Common myeloid progenitor, CD34-positive (primary cell): ENCODE measurements at regions of chr10 and their contacts with region 1.

Region 1: GRCh38 chr10:80205478-80206276 is at the start of gene ANXA11:
- DNase-seq: peak; percentile 76 to 85 (median 84)
- H3K4me3 ChIP-seq: peak within 1 kb of the TSS; percentile 66 to 90 (median 77)
- H3K27ac ChIP-seq: peak within 1 kb of the TSS; percentile 25 to 83
- H3K4me1 ChIP-seq: peaks cover 8 to 49% (median 43%) of the 10 kb centered on the region in 4 experiments
- H3K27me3 ChIP-seq: no peaks in the 10 kb centered on the region

Region 2: GRCh38 chr10:80144067-80144695 is 61.5 kb before region 1 on chr10:
- CTCF ChIA-PET with region 1: interaction called, 16 read pairs
- POLR2A ChIA-PET with region 1: no interaction called
- DNase-seq: peak in 2 of 3 donors; percentile 24 to 39
- H3K4me3 ChIP-seq: peak overlapping the region in 6 of 7 experiments; percentile 25 to 71 (median 48)
- H3K27ac ChIP-seq: no peak overlapping the region
- H3K4me1 ChIP-seq: peaks cover 0 to 18% (median 15%) of the 10 kb centered on the region in 4 experiments
- H3K27me3 ChIP-seq: peaks cover 0 to 6% (median 3%) of the 10 kb centered on the region in 5 experiments

Region 3: GRCh38 chr10:80161331-80162083 is 44.2 kb before region 1 on chr10:
- CTCF ChIA-PET with region 1: interaction called, 16 read pairs
- POLR2A ChIA-PET with region 1: interaction called, 3 read pairs
- DNase-seq: peak; percentile 30 to 61 (median 51)
- H3K4me3 ChIP-seq: no peak overlapping the region
- H3K27ac ChIP-seq: no peak overlapping the region
- H3K4me1 ChIP-seq: peaks cover 0 to 21% (median 14%) of the 10 kb centered on the region in 4 experiments
- H3K27me3 ChIP-seq: no peaks in the 10 kb centered on the region

Region 4: GRCh38 chr10:80186477-80186944 is 19.2 kb before region 1 on chr10:
- CTCF ChIA-PET with region 1: interaction called, 14 read pairs
- POLR2A ChIA-PET with region 1: interaction called, 3 read pairs
- DNase-seq: no peak
- H3K4me3 ChIP-seq: no peak overlapping the region
- H3K27ac ChIP-seq: peak overlapping the region in 1 of 2 experiments; percentile 75
- H3K4me1 ChIP-seq: peaks cover 15 to 32% (median 27%) of the 10 kb centered on the region in 4 experiments
- H3K27me3 ChIP-seq: no peaks in the 10 kb centered on the region

Region 5: DNA sequence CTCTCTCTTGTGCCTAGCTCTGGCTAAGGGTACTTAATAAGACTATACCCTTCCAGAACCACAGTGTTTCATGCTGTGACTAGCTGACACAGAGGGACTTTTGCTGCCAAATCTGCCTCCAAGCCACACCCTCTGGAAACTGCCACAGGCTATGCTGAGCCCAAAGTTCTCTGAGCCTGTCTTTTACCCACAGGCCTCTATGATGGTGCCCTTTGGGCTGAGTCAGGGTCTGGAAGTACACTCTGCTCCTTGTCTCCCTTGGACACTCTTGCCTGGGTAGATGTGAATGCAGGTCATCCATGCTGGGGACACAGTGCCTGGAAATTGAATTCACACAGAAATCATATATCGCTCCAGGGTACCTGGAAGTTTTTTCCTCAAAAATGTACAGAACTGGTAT is 128.3 kb after region 1 on chr10:
- CTCF ChIA-PET with region 1: no interaction called
- POLR2A ChIA-PET with region 1: no interaction called
- DNase-seq: no peak
- H3K4me3 ChIP-seq: no peak overlapping the region
- H3K27ac ChIP-seq: no peak overlapping the region
- H3K4me1 ChIP-seq: no peaks in the 10 kb centered on the region
- H3K27me3 ChIP-seq: no peaks in the 10 kb centered on the region